Calu3 (cell line): ENCODE measurements at regions of chr12 and their contacts with region 1.

Region 1: DNA sequence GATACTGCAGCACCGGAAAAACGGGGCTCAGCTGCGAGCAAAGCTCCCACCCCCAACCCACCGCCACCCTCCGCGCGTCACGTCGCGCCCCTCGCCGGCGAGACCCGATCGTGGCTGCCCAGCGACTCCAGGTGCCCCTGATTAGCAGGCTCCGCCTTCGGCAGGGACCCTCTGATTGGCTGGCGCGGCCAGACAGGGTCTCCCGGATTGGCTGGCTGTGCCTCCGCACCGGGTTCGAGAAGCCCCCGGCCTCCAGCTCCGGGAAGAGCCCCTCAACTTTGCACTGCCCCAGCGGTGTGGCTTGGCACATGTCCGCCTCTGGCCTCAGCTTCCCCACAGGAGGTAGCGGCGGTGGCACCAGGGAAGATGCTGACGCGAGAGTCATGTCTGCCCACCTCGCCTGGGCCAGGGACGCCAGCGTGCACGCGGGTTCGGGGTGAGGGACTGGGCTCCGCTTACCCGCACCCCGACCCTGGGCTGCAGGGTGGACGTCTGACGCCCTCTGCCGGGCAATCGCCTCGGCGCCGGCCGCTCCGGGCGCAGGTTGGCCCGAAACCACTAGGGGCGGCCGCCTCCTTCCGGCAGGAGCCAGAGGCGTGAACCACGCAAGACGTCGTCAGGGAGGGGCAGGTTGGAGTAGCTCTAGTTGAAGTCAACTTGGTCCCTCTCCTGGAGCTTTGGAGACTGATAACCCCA is 498 bp upstream of the RHOF start:
- DNase-seq: peak; percentile 98
- H3K4me3 Mint-ChIP-seq: peak overlapping the region; percentile 86
- H3K27ac Mint-ChIP-seq: peak overlapping the region; percentile 89
- H3K4me1 Mint-ChIP-seq: peaks cover 81% of the 10 kb centered on the region
- H3K27me3 Mint-ChIP-seq: no peaks in the 10 kb centered on the region
- CTCF ChIP-seq: peak; percentile 99

Region 2: GRCh38 chr12:121697098-121697698 is 96.8 kb before region 1 on chr12:
- CTCF ChIA-PET with region 1: interaction called, 10 read pairs
- intact Hi-C with region 1: loop called (anchors 1 kb)
- DNase-seq: peak; percentile 57
- H3K4me3 Mint-ChIP-seq: no peak overlapping the region
- H3K27ac Mint-ChIP-seq: no peak overlapping the region
- H3K4me1 Mint-ChIP-seq: no peaks in the 10 kb centered on the region
- H3K27me3 Mint-ChIP-seq: no peaks in the 10 kb centered on the region
- CTCF ChIP-seq: peak; percentile 37

Region 3: GRCh38 chr12:121718667-121719239 is 75.2 kb before region 1 on chr12:
- CTCF ChIA-PET with region 1: no interaction called
- intact Hi-C with region 1: no loop called
- DNase-seq: no peak
- H3K4me3 Mint-ChIP-seq: no peak overlapping the region
- H3K27ac Mint-ChIP-seq: no peak overlapping the region
- H3K4me1 Mint-ChIP-seq: peaks cover 12% of the 10 kb centered on the region
- H3K27me3 Mint-ChIP-seq: no peaks in the 10 kb centered on the region
- CTCF ChIP-seq: no peak

Region 4: DNA sequence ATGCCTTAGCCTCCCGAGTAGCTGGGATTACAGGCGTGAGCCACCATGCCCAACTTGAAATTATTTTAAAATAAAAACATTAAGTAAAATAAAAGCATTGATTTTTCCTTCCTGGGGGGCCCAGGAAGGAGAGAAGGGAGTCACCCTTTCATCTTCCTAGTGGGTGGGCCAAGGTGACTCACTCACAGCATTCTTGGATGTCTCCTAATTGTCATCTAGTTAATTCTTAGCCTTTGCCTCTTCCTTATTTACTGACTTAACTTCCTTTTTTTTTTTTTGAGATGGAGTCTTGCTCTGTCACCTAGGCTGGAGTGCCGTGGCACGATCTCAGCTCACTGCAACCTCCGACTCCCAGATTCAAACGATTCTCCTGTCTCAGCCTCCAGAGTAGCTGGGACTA is 52.2 kb before region 1 on chr12:
- CTCF ChIA-PET with region 1: no interaction called
- intact Hi-C with region 1: no loop called
- DNase-seq: no peak
- H3K4me3 Mint-ChIP-seq: no peak overlapping the region
- H3K27ac Mint-ChIP-seq: no peak overlapping the region
- H3K4me1 Mint-ChIP-seq: no peaks in the 10 kb centered on the region
- H3K27me3 Mint-ChIP-seq: no peaks in the 10 kb centered on the region
- CTCF ChIP-seq: no peak

Region 5: GRCh38 chr12:121773011-121773777 is 20.8 kb before region 1 on chr12:
- CTCF ChIA-PET with region 1: interaction called, 25 read pairs
- intact Hi-C with region 1: no loop called
- DNase-seq: peak; percentile 89
- H3K4me3 Mint-ChIP-seq: no peak overlapping the region
- H3K27ac Mint-ChIP-seq: no peak overlapping the region
- H3K4me1 Mint-ChIP-seq: no peaks in the 10 kb centered on the region
- H3K27me3 Mint-ChIP-seq: no peaks in the 10 kb centered on the region
- CTCF ChIP-seq: peak; percentile 73

Region 6: DNA sequence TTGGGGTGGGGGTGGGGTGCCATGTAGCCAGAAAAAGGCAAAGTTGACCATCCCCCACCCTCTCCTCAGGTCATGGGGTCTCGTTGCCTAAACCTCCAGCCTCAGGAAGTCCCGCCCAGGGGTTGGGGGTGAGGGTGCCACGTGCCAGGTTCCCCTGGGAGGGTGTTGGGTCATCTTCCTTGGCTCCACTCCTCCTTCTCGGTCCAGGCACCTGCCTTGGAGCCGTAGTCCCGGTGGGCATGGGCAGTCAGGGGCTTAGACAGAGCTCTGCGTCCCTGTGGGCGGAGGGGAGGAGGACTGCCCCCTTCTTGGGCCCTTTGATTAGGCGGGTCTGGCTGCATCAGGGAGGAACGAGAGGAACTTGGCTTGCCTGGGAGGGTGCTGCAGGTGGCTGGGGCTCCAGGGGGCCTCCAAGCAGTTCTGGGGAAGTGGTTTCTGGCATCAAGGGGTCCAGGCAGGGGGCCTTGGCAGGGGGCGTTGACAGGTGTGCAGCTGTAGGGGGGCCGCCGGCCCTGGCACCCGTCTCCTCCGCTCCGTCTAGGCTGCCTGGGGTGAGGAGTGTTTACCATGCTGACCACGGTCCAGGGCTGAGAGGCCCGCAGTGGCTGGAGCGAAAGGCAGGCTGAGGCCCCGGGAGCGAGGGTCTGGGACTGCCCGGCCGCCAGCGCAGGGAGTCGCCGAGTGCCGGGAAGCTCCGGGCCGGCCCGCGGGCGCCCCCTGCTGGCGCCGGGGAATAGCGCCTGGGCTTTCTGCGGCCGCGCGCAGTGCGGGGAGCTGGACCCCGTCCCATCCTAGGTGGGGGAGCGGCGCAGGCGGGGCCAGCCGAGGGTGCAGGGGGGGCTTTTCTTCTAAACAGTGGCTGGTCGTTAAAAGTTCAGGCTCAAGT is 17.7 kb after region 1 on chr12:
- CTCF ChIA-PET with region 1: interaction called, 179 read pairs
- intact Hi-C with region 1: loop called (anchors 1 kb)
- DNase-seq: peak; percentile 89
- H3K4me3 Mint-ChIP-seq: peak overlapping the region; percentile 94
- H3K27ac Mint-ChIP-seq: peak overlapping the region; percentile 81
- H3K4me1 Mint-ChIP-seq: peaks cover 33% of the 10 kb centered on the region
- H3K27me3 Mint-ChIP-seq: no peaks in the 10 kb centered on the region
- CTCF ChIP-seq: peak; percentile 98

Region 7: GRCh38 chr12:121888478-121889266 is 94.7 kb after region 1 on chr12 and contains the start of gene PSMD9:
- CTCF ChIA-PET with region 1: interaction called, 32 read pairs
- intact Hi-C with region 1: loop called (anchors 1 kb)
- DNase-seq: peak; percentile 99
- H3K4me3 Mint-ChIP-seq: peak within 1 kb of the TSS; percentile 95
- H3K27ac Mint-ChIP-seq: peak within 1 kb of the TSS; percentile 88
- H3K4me1 Mint-ChIP-seq: peaks cover 14% of the 10 kb centered on the region
- H3K27me3 Mint-ChIP-seq: no peaks in the 10 kb centered on the region
- CTCF ChIP-seq: peak; percentile 45
- total RNA-seq, gene PSMD9: 66.0 and 68.3 TPM in 2 replicates

Region 8: DNA sequence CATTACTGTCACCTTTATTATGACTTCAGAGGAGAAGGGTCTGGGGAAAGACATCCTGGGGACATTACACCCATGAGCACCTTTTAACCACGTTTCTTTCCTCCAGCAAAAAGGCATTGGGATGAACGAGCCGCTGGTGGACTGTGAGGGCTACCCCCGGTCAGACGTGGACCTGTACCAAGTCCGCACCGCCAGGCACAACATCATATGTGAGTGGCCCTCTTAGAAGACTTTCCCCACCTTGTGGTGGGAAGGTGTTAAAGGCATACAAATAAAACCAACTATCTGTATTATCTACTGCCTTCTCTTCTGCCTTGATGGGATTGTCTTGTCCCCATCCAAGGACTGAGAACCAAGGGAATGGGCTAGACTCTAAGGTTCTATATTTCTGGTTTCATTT is 100.6 kb after region 1 on chr12:
- CTCF ChIA-PET with region 1: interaction called, 32 read pairs
- intact Hi-C with region 1: no loop called
- DNase-seq: no peak
- H3K4me3 Mint-ChIP-seq: no peak overlapping the region
- H3K27ac Mint-ChIP-seq: no peak overlapping the region
- H3K4me1 Mint-ChIP-seq: peaks cover 27% of the 10 kb centered on the region
- H3K27me3 Mint-ChIP-seq: no peaks in the 10 kb centered on the region
- CTCF ChIP-seq: peak; percentile 28